MCF 10A (cell line): ENCODE measurements at regions of chr3 and their contacts with region 1.

Region 1: GRCh38 chr3:94062431-94063404 is at the starts of genes DHFR2 and NSUN3:
- DNase-seq: peak; percentile 98
- H3K4me3 Mint-ChIP-seq: peak within 1 kb of the TSS; percentile 92
- H3K27ac Mint-ChIP-seq: peak within 1 kb of the TSS; percentile 99
- H3K4me1 Mint-ChIP-seq: peaks cover 14% of the 10 kb centered on the region
- H3K27me3 Mint-ChIP-seq: no peaks in the 10 kb centered on the region
- CTCF ChIP-seq: no peak
- total RNA-seq, gene DHFR2: 3.4 and 5.0 TPM in 2 replicates
- total RNA-seq, gene NSUN3: 10.6 and 13.0 TPM in 2 replicates

Region 2: DNA sequence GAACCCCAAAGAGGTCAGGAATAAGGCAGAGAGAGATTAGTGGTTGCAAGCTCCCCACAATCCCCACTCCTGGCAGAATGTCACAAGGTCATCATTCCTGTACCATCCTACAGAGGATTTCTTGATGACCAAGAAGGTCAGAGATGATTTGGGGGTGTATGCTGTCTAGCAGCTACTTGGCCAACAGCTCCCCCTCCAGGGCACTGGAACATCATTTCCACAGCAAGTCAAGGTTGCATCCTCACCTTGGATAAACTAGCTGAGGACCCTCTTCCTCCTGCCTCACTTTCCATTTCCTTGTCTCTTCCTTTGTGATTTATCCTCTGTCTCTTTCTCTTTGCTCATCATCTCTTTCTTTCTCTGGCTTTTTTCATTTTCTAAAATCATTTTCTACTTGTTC is 195.3 kb before region 1 on chr3:
- CTCF ChIA-PET with region 1: no interaction called
- POLR2A ChIA-PET with region 1: no interaction called
- intact Hi-C with region 1: loop called (anchors 10 kb)
- DNase-seq: peak; percentile 2
- H3K4me3 Mint-ChIP-seq: no peak overlapping the region
- H3K27ac Mint-ChIP-seq: no peak overlapping the region
- H3K4me1 Mint-ChIP-seq: no peaks in the 10 kb centered on the region
- H3K27me3 Mint-ChIP-seq: no peaks in the 10 kb centered on the region
- CTCF ChIP-seq: no peak

Region 3: GRCh38 chr3:93979833-93980676 is 82.7 kb before region 1 on chr3 and contains the start of gene ARL13B:
- CTCF ChIA-PET with region 1: no interaction called
- POLR2A ChIA-PET with region 1: interaction called, 10 read pairs
- intact Hi-C with region 1: no loop called
- DNase-seq: peak; percentile 99
- H3K4me3 Mint-ChIP-seq: peak within 1 kb of the TSS; percentile 83
- H3K27ac Mint-ChIP-seq: peak within 1 kb of the TSS; percentile 98
- H3K4me1 Mint-ChIP-seq: peaks cover 10% of the 10 kb centered on the region
- H3K27me3 Mint-ChIP-seq: no peaks in the 10 kb centered on the region
- CTCF ChIP-seq: no peak
- total RNA-seq, gene ARL13B: 22.0 and 26.0 TPM in 2 replicates

Region 4: DNA sequence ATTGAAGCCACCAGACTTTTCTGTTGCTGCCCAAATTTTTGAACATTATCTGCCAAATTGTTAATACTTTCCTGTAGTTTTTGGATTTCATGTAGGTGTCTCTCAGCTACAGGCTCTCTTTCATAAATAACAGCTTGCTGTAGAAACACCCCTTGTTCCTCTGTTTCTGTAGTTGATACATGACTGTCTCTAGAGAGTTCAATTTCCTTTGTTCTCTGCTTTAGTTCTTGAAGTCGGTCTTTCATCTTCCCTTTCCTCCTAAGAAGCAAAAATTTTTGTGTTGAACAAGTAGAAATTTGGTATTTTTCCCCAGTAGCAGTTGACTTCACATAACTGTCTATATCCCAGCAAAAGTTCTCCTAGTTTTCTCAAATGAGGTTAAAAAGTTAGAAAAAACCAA is 47.7 kb before region 1 on chr3:
- CTCF ChIA-PET with region 1: interaction called, 3 read pairs
- POLR2A ChIA-PET with region 1: interaction called, 12 read pairs
- intact Hi-C with region 1: no loop called
- DNase-seq: no peak
- H3K4me3 Mint-ChIP-seq: no peak overlapping the region
- H3K27ac Mint-ChIP-seq: no peak overlapping the region
- H3K4me1 Mint-ChIP-seq: peaks cover 5% of the 10 kb centered on the region
- H3K27me3 Mint-ChIP-seq: no peaks in the 10 kb centered on the region
- CTCF ChIP-seq: no peak